ENCODE measurements at regions of chr1 and their contacts with region 1.

Region 1: GRCh38 chr1:105793536-105794146 is 1262.8 kb upstream of the PRMT6 start:
- DNase-seq: peak; percentile 48
- ATAC-seq: no peak
- H3K4me3 Mint-ChIP-seq: no peak overlapping the region
- H3K27ac Mint-ChIP-seq: no peak overlapping the region
- H3K4me1 Mint-ChIP-seq: no peaks in the 10 kb centered on the region
- H3K27me3 Mint-ChIP-seq: no peaks in the 10 kb centered on the region
- CTCF ChIP-seq: peak; percentile 53

Region 2: DNA sequence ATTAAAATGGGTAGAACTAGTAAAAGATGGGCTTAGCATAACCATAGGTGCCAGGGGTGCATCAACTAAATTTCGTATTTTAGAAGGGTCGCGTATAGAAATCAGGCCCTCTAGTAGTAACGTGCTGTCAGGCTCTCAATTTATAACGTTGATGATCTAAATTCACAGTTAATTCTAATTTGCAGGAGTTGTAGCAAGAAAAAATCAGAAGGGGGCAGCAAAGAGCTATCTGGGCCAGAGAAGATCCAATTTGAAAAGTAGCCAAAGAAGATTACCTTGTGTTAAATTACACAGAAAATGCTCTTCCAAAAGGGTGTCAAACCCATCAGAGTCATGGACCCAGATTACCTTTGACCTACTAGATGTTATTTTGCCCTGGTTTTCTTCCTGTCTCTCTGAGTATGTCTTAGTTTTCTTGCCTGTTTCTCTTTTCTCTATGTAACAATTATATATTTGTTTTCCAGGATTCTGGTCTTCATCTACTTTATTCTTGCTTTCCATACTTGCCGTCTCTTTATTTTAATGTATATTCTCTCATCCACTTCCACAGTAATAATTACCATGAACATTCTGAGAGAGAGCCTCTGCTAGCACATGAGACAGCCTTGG is 1013.1 kb before region 1 on chr1:
- CTCF ChIA-PET with region 1: no interaction called
- POLR2A ChIA-PET with region 1: no interaction called
- intact Hi-C with region 1: loop called (anchors 5 kb)
- DNase-seq: peak; percentile 4
- ATAC-seq: no peak
- H3K4me3 Mint-ChIP-seq: no peak overlapping the region
- H3K27ac Mint-ChIP-seq: no peak overlapping the region
- H3K4me1 Mint-ChIP-seq: no peaks in the 10 kb centered on the region
- H3K27me3 Mint-ChIP-seq: no peaks in the 10 kb centered on the region
- CTCF ChIP-seq: peak; percentile 75

Measured in activated CD8-positive, alpha-beta T cell treated with anti-CD3 and anti-CD28 coated beads for 36 hours (primary cell).